AG04449 (cell line): ENCODE measurements at regions of chr14 and their contacts with region 1.

Region 1: GRCh38 chr14:74362361-74362915 is 14.2 kb downstream of the VRTN start:
- DNase-seq: peak; percentile 12
- H3K4me3 ChIP-seq: no peak overlapping the region
- CTCF ChIP-seq: peak; percentile 93

Region 2: GRCh38 chr14:74346341-74346740 is 16.1 kb before region 1 on chr14:
- CTCF ChIA-PET with region 1: interaction called, 14 read pairs
- POLR2A ChIA-PET with region 1: no interaction called
- DNase-seq: no peak
- H3K4me3 ChIP-seq: no peak overlapping the region
- CTCF ChIP-seq: no peak

Region 3: GRCh38 chr14:74493343-74494261 is 131.2 kb after region 1 on chr14 and contains the start of gene ISCA2:
- CTCF ChIA-PET with region 1: interaction called, 13 read pairs
- POLR2A ChIA-PET with region 1: no interaction called
- DNase-seq: peak; percentile 93
- H3K4me3 ChIP-seq: peak within 1 kb of the TSS; percentile 99
- CTCF ChIP-seq: no peak